Right ventricle myocardium inferior (tissue), 1 donor: ENCODE measurements at regions of chr14 and their contacts with region 1.

Region 1: GRCh38 chr14:76647697-76648298 is 113.5 kb upstream of the VASH1 start:
- DNase-seq: no peak
- ATAC-seq: peak; percentile 58

Region 2: DNA sequence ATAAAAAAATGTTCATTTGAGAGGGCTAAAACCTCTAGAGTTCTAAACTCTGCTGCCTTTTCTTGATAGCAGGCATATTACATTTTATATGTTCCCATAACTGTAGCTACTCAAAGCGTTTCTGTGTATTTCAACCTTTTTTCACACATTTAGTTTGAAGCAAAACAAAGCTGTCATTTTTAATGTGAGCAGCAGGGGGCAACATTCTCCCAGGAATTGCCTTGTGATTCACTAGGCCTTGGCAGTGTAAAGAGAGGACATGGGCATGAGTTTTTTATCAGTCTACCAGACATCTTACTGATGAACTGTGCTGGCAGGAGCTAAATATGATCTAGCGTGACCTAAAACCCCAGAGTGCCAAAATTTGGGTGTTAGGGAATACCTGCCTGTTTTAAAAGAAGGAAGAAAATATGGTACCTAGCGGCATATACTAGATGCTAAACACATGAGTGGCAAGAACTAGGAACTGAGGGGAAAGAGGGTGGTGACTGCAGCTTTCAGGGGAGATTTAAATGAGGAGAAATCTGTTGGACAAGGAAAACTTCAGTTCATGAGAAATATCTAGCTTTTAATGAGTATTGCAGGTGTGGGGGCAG is 596.9 kb before region 1 on chr14:
- intact Hi-C with region 1: loop called (anchors 2 kb)
- DNase-seq: no peak
- ATAC-seq: peak; percentile 65

Region 3: DNA sequence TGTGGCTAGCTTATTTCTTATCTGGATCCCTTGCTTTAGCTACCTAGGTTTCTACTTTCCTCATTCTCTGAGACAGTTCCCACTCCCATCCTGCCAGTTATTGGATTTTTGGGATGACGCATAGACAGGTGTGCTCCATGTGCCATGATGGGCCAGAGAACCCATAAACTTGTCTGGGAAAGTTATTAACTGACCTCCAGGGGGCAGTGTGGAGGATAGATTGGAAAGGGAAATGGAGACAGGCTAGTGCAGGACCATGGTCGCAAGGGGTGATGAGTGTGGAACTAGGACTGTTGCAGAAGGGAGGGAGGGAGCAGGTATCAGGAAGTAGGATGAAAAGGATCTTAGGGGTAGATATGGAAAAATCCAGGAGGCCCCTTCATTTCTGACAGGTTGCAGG is 191.6 kb before region 1 on chr14:
- intact Hi-C with region 1: loop called (anchors 2 kb)
- DNase-seq: no peak
- ATAC-seq: no peak

Region 4: GRCh38 chr14:76701981-76702380 is 54.2 kb after region 1 on chr14:
- intact Hi-C with region 1: no loop called
- DNase-seq: no peak
- ATAC-seq: peak; percentile 77

Region 5: DNA sequence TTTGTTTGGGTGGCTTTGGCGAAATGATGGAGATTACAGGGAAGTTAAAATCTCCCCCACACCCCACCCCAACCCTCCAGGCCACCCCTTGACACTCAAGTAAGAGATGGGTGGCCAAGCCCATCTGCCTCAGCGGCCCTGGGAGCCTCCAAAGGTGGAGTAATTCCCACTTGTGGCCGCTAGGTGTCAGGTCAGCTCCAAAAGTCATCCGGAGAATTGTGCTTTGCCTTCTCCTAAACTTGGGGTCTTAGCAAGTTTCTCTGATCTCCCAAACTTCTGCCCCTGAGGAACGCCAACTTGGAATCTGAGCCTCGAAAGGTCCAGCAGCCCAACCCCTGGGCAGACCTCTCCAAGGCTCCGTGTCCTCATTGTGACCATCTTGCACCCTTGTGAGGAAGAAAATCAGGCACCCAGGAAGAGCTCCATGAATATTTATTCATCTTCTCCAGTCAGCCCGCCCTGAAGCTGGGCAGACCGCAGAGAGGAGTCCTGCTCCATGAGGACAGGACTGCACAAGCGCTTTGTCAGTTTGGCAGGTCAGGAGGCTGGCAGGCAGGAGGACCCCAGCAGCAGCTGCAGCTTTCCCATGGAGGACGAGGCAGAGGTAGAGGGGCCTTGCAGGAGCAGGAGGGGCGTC is 225.1 kb after region 1 on chr14:
- intact Hi-C with region 1: no loop called
- DNase-seq: no peak
- ATAC-seq: no peak